WTC11 (cell line): ENCODE measurements at regions of chr17 and their contacts with region 1.

Region 1: DNA sequence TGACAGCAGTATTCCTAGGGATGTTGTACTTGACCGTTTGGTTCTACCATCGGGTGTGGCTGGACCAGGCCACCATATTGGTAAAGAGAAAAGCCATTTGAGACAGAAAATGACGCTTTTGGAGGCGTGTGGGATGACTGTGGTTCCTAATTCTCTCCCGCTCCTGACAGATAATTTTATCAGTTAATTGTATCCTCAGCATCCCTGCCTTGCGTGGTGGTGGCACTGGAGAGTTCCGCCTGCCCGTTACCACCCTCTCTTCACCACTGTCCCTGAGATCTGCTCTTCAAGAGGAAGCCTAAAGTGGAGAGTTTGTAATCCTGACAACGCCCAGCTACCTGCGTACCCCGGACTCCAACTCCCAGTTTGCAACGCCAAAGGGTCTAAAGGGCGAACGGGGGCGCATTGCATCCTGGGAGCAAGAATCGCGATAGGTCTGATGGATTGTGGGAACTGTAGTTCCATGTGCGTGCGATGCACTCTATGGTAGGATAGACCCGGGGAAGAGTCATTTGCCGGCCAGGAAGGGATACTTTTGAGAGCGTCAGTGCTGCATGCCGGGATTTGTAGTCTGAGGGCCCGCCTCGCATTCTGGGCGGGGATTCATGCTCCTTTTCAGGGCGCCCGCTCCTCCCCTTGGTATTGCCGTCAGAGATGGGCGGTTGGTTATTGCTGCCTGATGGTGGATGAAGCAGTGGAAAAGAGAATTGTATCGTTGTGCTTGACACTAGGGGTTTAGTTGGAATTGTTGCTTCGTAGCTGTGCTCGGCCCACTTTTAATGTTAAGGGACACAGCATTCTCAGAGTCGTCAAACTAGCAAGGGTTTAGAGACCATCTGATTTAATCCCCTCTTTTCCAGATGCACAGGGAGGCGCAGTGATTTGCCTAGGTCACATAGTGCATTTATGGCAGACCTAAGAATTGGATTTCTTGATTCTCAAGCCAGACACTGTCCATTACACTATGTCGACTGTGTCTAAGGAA is 965 bp upstream of the PHF12 start:
- DNase-seq: peak; percentile 94
- ATAC-seq: peak; percentile 74
- H3K4me3 Mint-ChIP-seq: no peak overlapping the region
- H3K27ac Mint-ChIP-seq: no peak overlapping the region
- H3K4me1 Mint-ChIP-seq: peaks cover 28% of the 10 kb centered on the region
- H3K27me3 Mint-ChIP-seq: no peaks in the 10 kb centered on the region
- CTCF ChIP-seq: no peak

Region 2: GRCh38 chr17:28743225-28744103 is 208.8 kb before region 1 on chr17 and contains the start of gene TRAF4:
- CTCF ChIA-PET with region 1: interaction called, 4 read pairs
- POLR2A ChIA-PET with region 1: interaction called, 12 read pairs
- DNase-seq: peak; percentile 83
- ATAC-seq: peak; percentile 57
- H3K4me3 Mint-ChIP-seq: peak within 1 kb of the TSS; percentile 88
- H3K27ac Mint-ChIP-seq: peak within 1 kb of the TSS; percentile 94
- H3K4me1 Mint-ChIP-seq: peaks cover 39% of the 10 kb centered on the region
- H3K27me3 Mint-ChIP-seq: no peaks in the 10 kb centered on the region
- CTCF ChIP-seq: no peak
- total RNA-seq, gene TRAF4: 192 to 268 TPM (median 192 TPM) in 3 replicates

Region 3: DNA sequence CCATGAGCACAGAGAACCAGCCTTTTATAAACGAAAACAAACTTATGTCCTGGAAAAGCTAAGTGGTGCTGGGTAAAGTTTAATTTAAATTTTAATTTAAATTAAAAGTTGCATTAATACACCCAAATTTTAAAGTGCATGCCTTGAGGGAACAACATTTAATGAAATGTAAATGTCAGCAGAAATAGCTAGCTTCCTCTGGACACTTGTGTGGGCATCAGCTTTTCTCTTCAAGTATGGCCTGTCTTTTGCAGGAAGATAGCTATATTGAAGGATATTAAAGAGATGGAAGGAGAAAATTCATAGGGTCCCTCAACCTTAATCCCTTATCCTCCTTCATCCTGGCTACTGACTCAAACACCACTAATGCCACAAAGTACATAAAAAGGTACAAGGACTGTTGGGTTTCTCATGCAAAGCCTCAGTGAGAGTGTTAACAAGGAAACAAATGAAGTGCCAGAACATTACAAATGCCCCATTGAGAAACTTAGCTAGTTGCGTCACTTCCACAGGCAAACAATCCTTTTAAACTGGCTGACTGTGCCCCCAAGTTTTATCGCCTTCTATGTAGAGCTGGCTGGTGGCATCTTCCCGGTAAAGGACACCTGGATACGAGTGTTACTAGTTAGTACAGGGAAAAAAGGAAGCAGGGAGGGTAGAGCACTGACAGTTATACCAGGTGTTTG is 15.1 kb before region 1 on chr17:
- CTCF ChIA-PET with region 1: interaction called, 11 read pairs
- POLR2A ChIA-PET with region 1: interaction called, 3 read pairs
- DNase-seq: no peak
- ATAC-seq: no peak
- H3K4me3 Mint-ChIP-seq: no peak overlapping the region
- H3K27ac Mint-ChIP-seq: peak overlapping the region; percentile 98
- H3K4me1 Mint-ChIP-seq: peaks cover 58% of the 10 kb centered on the region
- H3K27me3 Mint-ChIP-seq: no peaks in the 10 kb centered on the region
- CTCF ChIP-seq: no peak

Region 4: DNA sequence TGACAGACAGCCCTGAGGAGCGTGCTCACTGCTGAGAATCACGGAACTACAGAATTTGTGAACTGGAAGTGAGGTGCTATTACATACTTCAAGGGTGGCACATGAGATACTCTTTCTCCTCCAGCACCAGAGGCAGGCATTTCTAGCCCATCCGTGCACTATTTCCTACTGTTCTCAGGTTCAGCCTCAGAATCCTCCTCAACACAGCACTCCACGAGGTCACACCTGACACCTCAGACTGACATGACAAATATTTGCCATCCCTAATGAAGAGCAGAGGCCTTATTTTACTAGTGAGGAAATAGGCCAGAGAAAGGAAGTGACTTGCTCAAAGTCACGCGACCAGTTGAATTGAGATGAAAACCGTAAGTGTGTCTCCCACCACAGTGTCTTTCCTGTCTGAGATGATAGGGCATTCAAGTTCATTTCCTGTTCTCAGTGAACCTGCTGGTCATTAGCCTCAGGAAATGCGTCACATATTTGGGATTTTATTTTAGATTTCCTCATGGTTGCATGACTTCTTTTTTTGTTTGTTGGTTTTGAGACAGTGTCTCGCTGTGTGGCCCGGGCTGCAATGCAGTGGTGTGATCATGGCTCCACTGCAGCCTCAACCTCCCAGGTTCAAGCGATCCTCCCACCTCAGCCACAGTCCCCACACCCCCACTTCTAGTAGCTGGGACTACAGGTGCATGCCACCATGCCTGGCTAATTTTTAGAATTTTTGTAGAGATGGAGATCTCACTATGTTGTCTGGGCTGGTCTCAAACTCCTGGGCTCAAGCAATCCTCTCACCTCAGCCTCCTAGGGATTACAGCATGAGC is 30.1 kb after region 1 on chr17:
- CTCF ChIA-PET with region 1: interaction called, 18 read pairs
- POLR2A ChIA-PET with region 1: interaction called, 3 read pairs
- DNase-seq: no peak
- ATAC-seq: no peak
- H3K4me3 Mint-ChIP-seq: no peak overlapping the region
- H3K27ac Mint-ChIP-seq: no peak overlapping the region
- H3K4me1 Mint-ChIP-seq: peaks cover 36% of the 10 kb centered on the region
- H3K27me3 Mint-ChIP-seq: peaks cover 54% of the 10 kb centered on the region
- CTCF ChIP-seq: no peak

Region 5: DNA sequence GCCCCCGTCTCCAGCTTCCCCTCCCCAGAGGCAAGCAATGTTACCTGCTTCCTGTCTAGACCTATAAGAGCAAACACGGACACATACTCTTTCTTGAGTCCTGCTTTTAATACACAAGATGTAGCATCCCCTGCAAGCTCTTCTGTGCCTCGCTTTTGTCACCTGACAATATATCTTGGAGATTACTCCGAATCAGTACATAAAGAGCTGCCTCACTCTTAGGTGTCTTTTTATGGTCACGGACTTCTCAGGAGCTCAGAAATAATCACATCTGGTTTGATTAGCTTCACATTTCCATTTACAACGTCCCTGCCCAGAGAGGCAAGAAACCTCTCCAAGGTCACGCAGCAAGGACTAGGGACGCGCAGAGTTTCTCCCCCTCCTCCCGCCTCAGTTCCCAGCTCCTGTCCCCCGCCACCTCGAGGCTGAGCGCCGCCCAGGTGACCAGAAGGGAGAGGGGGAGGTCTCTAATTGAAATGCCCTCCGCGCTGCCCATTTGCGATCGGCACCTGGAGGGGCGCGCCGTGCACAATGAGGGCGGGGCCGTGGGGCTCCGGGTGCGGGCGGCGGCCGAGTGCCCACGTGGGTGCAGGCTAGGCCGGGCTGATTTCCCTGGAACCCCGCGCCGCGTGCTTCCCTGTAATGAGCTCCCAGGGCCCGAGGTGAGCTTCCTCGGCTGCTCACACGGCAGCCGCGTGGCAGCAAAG is 67.3 kb after region 1 on chr17:
- CTCF ChIA-PET with region 1: interaction called, 13 read pairs
- POLR2A ChIA-PET with region 1: no interaction called
- DNase-seq: peak; percentile 72
- ATAC-seq: peak; percentile 72
- H3K4me3 Mint-ChIP-seq: peak overlapping the region; percentile 62
- H3K27ac Mint-ChIP-seq: peak overlapping the region; percentile 69; the same call in 1 of the 2 replicates
- H3K4me1 Mint-ChIP-seq: peaks cover 67% of the 10 kb centered on the region
- H3K27me3 Mint-ChIP-seq: peaks cover 29% of the 10 kb centered on the region
- CTCF ChIP-seq: no peak

Region 6: DNA sequence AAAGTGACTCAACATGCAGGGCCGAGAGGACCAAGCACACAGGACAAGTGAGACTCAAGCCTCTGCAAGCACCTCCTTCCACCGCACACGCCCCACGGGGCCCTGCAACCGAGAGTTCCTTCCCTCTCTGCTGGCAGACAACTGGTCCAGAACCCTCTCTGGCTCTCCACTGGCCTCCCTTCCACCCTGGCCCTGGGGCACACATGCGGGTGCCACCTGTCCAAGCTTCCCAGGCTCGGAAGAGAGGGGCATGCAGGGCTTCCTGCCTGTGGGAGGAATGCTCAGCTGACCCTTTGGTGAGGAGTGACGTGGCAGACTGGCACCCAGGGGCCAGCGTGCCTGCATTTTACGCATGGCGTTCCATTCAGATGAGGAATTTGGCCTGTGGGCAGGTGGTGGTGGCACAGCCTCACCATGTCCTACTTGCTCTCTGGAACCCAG is 150.5 kb after region 1 on chr17:
- CTCF ChIA-PET with region 1: interaction called, 762 read pairs
- POLR2A ChIA-PET with region 1: no interaction called
- DNase-seq: no peak
- ATAC-seq: no peak
- H3K4me3 Mint-ChIP-seq: no peak overlapping the region
- H3K27ac Mint-ChIP-seq: no peak overlapping the region
- H3K4me1 Mint-ChIP-seq: peaks cover 10% of the 10 kb centered on the region
- H3K27me3 Mint-ChIP-seq: no peaks in the 10 kb centered on the region
- CTCF ChIP-seq: no peak